ENCODE measurements at regions of chr2 and their contacts with region 1.

Region 1: DNA sequence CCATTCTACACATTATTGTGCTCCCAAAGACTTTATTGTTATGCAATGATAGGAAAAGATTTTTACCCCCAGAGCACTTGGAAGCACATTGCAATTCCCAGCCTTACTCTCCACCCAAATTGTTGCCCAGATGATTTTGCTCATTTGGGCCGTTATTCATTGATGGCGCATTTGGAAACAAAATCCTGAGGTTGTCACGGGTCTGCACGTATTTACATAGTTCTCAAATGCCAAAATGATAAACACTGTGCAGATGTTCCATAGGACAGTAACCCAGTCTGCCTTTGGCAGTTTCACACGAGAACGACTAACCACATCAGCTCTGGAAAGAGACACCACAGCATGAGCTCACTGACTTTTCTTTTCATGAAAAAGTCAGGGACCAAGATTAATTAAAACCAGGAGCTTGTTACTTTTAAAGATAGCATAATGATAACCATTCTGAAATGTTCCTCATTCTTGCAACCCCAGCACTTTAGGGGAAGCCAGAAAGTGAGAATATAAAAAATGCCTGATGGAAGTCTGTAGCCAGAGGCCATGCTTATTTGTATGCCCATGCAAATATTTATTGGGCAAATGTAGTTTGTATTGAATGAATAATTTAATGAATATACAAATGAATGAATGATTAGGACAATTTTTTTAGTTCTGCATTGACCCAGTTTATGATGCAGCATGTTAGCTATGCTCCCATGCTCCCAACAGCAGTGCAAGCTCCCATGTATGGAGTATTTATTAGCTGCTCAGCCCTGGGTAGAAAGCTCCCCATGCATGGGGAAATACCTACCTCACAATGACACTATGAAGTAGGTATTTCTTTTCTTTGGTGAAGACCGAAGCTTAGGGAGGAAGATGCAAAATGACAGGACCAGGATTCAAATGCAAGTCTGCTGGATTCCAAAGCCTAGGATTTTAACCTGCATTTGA is 84.6 kb downstream of the MAIP1 start:
- DNase-seq: no peak
- H3K4me3 ChIP-seq: no peak overlapping the region
- H3K27ac ChIP-seq: no peak overlapping the region
- H3K4me1 ChIP-seq: no peaks in the 10 kb centered on the region
- H3K27me3 ChIP-seq: no peaks in the 10 kb centered on the region
- CTCF ChIP-seq: no peak
- POLR2A ChIP-seq: no peak

Region 2: GRCh38 chr2:199861132-199861774 is 178.7 kb before region 1 on chr2:
- intact Hi-C with region 1: no loop called
- DNase-seq: no peak
- H3K4me3 ChIP-seq: no peak overlapping the region
- H3K27ac ChIP-seq: no peak overlapping the region
- H3K4me1 ChIP-seq: no peaks in the 10 kb centered on the region
- H3K27me3 ChIP-seq: no peaks in the 10 kb centered on the region
- CTCF ChIP-seq: peak; percentile 47 to 72 (median 62)
- POLR2A ChIP-seq: no peak

Region 3: GRCh38 chr2:200007306-200007705 is 32.7 kb before region 1 on chr2:
- intact Hi-C with region 1: loop called in 1 of 2 experiments (anchors 5 kb)
- DNase-seq: no peak
- H3K4me3 ChIP-seq: no peak overlapping the region
- H3K27ac ChIP-seq: no peak overlapping the region
- H3K4me1 ChIP-seq: no peaks in the 10 kb centered on the region
- H3K27me3 ChIP-seq: no peaks in the 10 kb centered on the region
- CTCF ChIP-seq: no peak
- POLR2A ChIP-seq: no peak

Measured in adrenal gland (tissue), 19 donors.